ENCODE measurements at regions of chr1 and their contacts with region 1.

Region 1: DNA sequence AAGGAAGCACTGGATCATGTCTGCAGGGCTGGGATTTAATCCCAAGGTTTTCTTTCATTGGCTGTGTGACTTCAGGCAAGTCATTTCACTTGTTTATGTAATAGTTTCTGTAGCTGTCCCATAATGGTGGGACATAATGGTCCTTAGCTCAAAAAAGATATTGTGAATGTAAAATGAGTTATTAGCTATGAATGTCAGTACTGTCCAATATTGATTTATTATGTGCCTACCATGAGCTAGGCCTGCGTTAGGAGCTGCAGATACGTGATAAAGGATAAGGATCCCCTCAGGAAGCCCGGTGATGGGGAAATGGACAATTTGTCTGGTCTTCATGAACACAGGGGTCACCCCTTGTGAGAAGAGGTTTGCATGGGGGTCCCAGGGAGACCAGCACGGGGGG is 95.8 kb downstream of the PLXNA2 start:
- DNase-seq: no peak
- ATAC-seq: no peak

Region 2: GRCh38 chr1:207973898-207974568 is 174.3 kb before region 1 on chr1:
- intact Hi-C with region 1: no loop called
- DNase-seq: no peak
- ATAC-seq: no peak

Region 3: GRCh38 chr1:208132287-208132883 is 16.0 kb before region 1 on chr1:
- intact Hi-C with region 1: loop called in 1 of 2 experiments (anchors 1 kb)
- DNase-seq: peak; percentile 86
- ATAC-seq: peak; percentile 85 to 87

Region 4: GRCh38 chr1:208184088-208184911 is 35.9 kb after region 1 on chr1:
- intact Hi-C with region 1: no loop called
- DNase-seq: peak; percentile 72
- ATAC-seq: peak; percentile 82 to 95

Region 5: GRCh38 chr1:208668991-208669390 is 520.6 kb after region 1 on chr1:
- intact Hi-C with region 1: no loop called
- DNase-seq: no peak
- ATAC-seq: no peak

Measured in left cardiac atrium (tissue), 4 donors.